Heart right ventricle (tissue), 16 donors: ENCODE measurements at regions of chr17 and their contacts with region 1.

Region 1: GRCh38 chr17:42517516-42517915 is 18.5 kb upstream of the NAGLU start:
- DNase-seq: peak; percentile 89 to 90
- ATAC-seq: peak; percentile 29 to 59 (median 50)
- H3K4me3 ChIP-seq: no peak overlapping the region
- H3K27ac ChIP-seq: peak overlapping the region; percentile 92 to 98 (median 95)
- H3K4me1 ChIP-seq: peaks cover 62 to 93% (median 73%) of the 10 kb centered on the region in 9 donors
- H3K27me3 ChIP-seq: no peaks in the 10 kb centered on the region
- CTCF ChIP-seq: peak; percentile 84 to 96 (median 94)

Region 2: DNA sequence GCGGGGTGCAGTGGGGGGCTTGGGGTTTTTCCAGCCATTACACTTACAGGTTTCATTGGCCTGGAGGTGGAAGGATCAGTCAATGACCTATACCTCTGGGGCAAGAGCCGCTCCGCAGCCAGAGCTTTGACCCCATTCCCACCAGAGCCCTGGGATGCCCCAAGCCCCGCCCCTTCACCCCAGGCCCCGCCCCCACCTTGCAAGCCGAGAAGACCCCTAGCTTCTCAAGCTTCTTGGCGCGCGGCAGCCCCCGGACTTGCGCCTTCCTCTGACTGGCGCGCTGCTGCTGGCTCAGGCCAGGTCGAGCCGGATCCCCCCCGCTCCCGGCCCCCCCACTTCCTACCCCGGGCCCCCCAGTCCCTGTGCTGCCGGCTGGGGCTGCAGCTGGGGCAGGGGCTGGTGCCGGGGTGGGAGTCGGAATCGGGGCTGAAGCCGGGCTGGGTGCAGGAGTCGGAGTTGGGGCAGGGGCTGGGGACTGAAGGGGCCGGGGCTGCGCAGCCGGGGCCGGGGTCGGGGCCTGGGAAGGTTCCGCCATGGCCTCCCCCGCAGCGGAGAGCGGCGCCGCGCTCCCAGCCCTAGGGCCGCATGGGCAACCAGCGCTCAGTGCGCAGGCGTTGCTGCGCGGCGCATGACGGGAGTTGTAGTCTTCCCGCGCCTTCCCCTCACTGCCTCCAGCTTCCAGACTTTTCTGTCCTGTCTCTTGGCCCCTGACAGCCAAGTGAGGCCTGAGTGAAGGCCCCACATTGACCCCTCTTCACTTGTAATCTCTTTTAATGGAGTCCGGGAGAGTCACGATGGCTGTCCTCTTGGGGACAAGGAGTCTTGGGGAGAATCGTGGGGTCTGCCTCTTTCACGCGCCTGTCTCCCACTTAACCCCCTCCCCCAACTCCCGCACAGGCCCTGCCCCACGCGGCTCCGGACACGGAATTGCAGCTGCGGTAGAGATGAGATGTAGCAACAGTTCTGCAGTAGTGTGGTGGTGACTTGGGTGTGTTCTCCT is 396.4 kb before region 1 on chr17 and contains the start of gene KAT2A:
- intact Hi-C with region 1: loop called in 2 of 10 experiments (anchors 5 to 10 kb)
- DNase-seq: peak; percentile 80 to 86
- ATAC-seq: peak; percentile 87 to 94 (median 92)
- H3K4me3 ChIP-seq: peak within 1 kb of the TSS; percentile 77 to 94 (median 82)
- H3K27ac ChIP-seq: peak within 1 kb of the TSS in 9 of 10 donors; percentile 68 to 84 (median 75)
- H3K4me1 ChIP-seq: peaks cover 5 to 47% (median 22%) of the 10 kb centered on the region in 9 donors
- H3K27me3 ChIP-seq: no peaks in the 10 kb centered on the region
- CTCF ChIP-seq: no peak
- total RNA-seq, gene KAT2A: 9.3 to 29.7 (median 13.3) TPM

Region 3: GRCh38 chr17:42322382-42323267 is 194.9 kb before region 1 on chr17:
- intact Hi-C with region 1: loop called in 8 of 10 experiments (anchors 2 to 10 kb)
- DNase-seq: peak; percentile 88 to 94
- ATAC-seq: peak; percentile 71 to 88 (median 82)
- H3K4me3 ChIP-seq: no peak overlapping the region
- H3K27ac ChIP-seq: peak overlapping the region in 4 of 10 donors; percentile 24 to 51 (median 35)
- H3K4me1 ChIP-seq: peaks cover 0 to 46% (median 21%) of the 10 kb centered on the region in 9 donors
- H3K27me3 ChIP-seq: no peaks in the 10 kb centered on the region
- CTCF ChIP-seq: peak; percentile 99 to 100 (median 99)

Region 4: DNA sequence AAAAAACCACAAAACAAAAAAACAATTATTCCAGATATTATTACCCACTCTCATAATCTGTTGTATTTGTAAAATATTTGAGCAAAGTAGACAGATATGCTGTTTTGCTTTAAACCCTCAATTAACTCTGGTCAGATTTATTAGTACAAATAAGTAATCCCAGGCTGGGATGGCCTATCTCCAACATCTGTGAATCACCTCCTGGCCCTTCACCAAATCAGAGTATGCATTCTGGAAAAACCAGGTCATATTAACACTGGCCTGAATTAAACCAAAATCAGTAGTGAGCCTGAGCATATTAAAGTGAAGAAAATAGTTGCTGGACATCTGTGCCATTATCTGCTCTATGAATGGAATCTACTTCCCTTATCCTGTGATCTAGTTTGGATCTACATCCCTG is 170.3 kb before region 1 on chr17:
- intact Hi-C with region 1: no loop called
- DNase-seq: peak in 1 of 2 donors; percentile 65
- ATAC-seq: peak in 7 of 8 donors; percentile 25 to 59 (median 50)
- H3K4me3 ChIP-seq: no peak overlapping the region
- H3K27ac ChIP-seq: peak overlapping the region in 6 of 10 donors; percentile 17 to 67 (median 30)
- H3K4me1 ChIP-seq: peaks cover 9 to 57% (median 39%) of the 10 kb centered on the region in 9 donors
- H3K27me3 ChIP-seq: no peaks in the 10 kb centered on the region
- CTCF ChIP-seq: no peak

Region 5: GRCh38 chr17:42405963-42406495 is 111.5 kb before region 1 on chr17:
- intact Hi-C with region 1: loop called in 4 of 10 experiments (anchors 5 to 10 kb)
- DNase-seq: peak; percentile 83 to 90
- ATAC-seq: peak; percentile 56 to 80 (median 68)
- H3K4me3 ChIP-seq: peak overlapping the region in 6 of 10 donors; percentile 16 to 25 (median 21)
- H3K27ac ChIP-seq: peak overlapping the region; percentile 19 to 100 (median 84)
- H3K4me1 ChIP-seq: peaks cover 40 to 93% (median 87%) of the 10 kb centered on the region in 9 donors
- H3K27me3 ChIP-seq: no peaks in the 10 kb centered on the region
- CTCF ChIP-seq: peak; percentile 79 to 91 (median 85)

Region 6: DNA sequence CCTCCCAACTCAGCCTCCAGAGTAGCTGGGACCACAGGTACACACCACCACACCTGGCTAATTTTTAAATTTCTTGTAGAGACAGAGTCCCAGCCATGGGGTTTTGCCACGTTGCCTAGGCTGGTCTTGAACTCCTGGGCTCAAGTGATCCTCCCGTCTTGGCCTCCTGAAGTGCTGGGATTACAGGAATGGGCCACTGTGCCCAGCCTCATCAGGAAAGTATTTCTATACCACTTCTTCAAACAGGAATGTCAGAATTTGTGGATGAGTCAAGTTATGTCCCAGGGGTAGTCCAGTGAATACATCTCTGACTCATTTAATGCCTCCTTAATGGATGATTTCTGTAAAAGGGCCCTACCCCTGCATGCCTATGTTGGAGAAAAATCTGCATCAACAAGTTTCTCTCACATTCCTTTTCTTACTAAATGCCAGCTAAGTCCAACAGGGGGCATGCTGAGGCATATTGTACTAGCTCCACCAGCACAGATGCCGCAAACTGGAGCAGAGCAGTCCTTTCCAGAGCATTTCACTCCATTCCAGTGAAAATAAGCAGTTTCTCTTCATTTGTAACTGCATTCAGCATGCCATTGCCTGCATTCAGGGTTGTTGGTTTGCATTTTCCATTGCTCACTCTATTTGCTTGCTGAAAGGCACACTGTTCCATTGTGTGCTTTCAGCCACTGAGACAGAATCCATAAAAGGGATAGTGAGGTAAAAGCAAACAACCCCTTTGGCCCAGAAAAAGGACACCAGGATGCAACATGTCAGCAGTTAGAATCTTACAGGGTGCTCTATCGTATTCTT is 89.2 kb before region 1 on chr17:
- intact Hi-C with region 1: loop called (anchors 5 to 10 kb)
- DNase-seq: peak in 1 of 2 donors; percentile 54
- ATAC-seq: peak in 6 of 8 donors; percentile 27 to 66 (median 50)
- H3K4me3 ChIP-seq: no peak overlapping the region
- H3K27ac ChIP-seq: peak overlapping the region in 1 of 10 donors; percentile 21
- H3K4me1 ChIP-seq: peaks cover 0 to 57% (median 32%) of the 10 kb centered on the region in 9 donors
- H3K27me3 ChIP-seq: peaks cover 0 to 19% (median 0%) of the 10 kb centered on the region in 7 donors
- CTCF ChIP-seq: peak; percentile 32 to 71 (median 63)

Region 7: GRCh38 chr17:42459256-42459800 is 58.2 kb before region 1 on chr17:
- intact Hi-C with region 1: loop called in 1 of 10 experiments (anchors 2 kb)
- DNase-seq: peak; percentile 36 to 41
- ATAC-seq: peak; percentile 29 to 65 (median 46)
- H3K4me3 ChIP-seq: peak overlapping the region; percentile 39 to 87 (median 78)
- H3K27ac ChIP-seq: peak overlapping the region; percentile 73 to 96 (median 92)
- H3K4me1 ChIP-seq: peaks cover 2 to 69% (median 34%) of the 10 kb centered on the region in 9 donors
- H3K27me3 ChIP-seq: no peaks in the 10 kb centered on the region
- CTCF ChIP-seq: peak in 5 of 9 donors; percentile 7 to 49 (median 43)